ENCODE measurements at regions of chr3 and their contacts with region 1.

Region 1: GRCh38 chr3:128680602-128681368 is 30.2 kb upstream of the RPN1 start:
- DNase-seq: peak; percentile 98
- ATAC-seq: peak; percentile 98
- H3K4me3 Mint-ChIP-seq: peak overlapping the region; percentile 96
- H3K27ac Mint-ChIP-seq: peak overlapping the region; percentile 99
- H3K4me1 Mint-ChIP-seq: peaks cover 31% of the 10 kb centered on the region
- H3K27me3 Mint-ChIP-seq: no peaks in the 10 kb centered on the region

Region 2: DNA sequence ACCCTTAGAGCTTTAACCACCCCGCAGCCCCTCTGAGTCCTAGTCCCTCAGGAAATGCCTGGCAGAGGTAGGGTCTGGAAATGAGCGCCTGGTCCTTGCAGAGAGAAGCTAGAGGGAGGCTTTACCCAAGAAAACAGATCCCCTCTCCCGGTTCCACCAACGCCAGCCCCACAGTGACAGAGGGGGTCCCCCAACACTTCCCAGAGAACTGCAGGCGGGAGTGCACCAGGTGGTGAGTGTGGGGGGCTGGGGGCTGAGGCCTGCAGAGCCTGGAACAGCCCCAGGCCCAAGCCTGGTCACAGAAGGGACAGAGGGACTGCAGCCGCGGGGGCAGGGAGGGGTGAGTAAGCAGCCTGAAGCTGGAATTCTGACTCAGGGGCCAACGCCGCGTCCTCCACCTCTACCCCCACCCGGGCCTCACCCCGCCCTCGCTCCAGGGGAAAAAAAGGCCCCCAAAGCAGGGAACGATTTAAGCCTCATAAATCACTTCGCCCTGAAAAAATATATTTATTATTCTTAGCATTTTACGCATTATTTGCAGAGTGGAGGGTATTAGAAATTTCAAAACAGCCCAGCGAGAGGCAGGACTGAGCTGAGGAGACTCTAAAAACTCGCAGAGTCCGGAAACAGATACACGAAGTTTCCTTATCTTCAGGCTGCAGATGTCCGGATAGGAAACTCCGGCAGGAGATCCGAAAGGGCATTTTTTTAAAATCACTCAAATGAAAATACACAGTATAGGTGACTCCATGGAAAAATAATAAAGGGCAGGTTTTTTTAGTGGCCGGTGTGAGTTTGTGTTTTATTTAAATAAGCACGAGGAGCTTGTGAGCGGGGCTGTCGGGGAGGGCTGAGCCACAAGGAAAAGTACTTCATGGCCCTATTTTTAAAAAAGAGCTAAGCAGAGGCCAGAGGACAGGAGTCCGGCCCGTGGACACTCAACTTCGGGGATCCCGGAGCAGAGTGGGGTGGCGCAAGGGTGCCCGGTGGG is 197.8 kb before region 1 on chr3:
- CTCF ChIA-PET with region 1: no interaction called
- POLR2A ChIA-PET with region 1: no interaction called
- intact Hi-C with region 1: no loop called
- DNase-seq: no peak
- ATAC-seq: no peak
- H3K4me3 Mint-ChIP-seq: no peak overlapping the region
- H3K27ac Mint-ChIP-seq: no peak overlapping the region
- H3K4me1 Mint-ChIP-seq: peaks cover 22% of the 10 kb centered on the region
- H3K27me3 Mint-ChIP-seq: peaks cover 64% of the 10 kb centered on the region

Region 3: DNA sequence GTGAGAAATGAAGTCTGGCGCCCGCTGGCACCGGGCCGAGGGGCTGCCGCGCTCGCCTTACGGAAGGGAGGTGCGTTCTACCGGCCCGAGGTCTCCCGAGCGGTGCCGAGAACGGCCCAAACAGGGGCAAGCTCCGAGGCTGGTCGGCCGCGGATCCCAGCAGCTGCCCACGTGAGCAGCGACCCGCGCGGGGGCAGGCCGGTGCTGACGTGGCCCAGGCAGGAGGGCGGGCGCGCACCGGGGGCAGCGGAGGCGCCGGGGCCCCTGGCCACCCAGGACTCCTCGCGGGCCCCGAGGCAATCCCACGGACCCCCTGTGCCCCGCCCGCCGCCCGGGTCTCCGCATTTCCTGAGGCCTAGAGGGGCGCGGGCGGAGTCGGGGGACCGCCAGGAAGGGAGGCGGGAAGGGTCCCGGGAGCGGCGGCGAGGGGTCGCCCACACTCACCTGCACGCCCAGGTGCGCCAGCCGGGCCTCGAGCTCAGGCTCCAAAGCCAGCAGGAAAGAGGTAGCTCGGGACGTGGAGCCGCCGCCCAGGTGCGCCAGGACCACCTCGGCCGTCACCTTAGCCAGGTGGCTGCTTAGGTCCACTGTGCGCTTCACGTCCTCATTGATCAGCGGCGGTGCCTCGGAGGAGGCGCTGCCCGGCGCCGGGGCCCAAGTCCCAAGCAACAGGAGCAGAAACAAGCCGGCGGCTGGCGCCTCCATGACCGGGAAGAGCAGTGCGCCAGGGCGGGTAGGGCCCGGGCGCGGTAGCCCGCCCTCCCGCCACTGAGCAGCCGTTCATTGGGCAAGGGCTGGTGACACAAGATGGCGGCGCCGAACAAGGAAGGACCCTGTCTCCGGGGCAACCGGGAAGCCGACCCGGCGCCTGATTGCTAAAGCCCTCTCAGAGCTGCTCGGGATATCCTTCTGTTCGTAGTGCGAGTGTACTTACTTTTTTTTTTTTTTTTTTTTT is 30.4 kb before region 1 on chr3 and contains the start of gene RPN1:
- CTCF ChIA-PET with region 1: interaction called, 15 read pairs
- POLR2A ChIA-PET with region 1: interaction called, 9 read pairs
- intact Hi-C with region 1: loop called in 1 of 2 experiments (anchors 1 kb)
- DNase-seq: peak; percentile 97
- ATAC-seq: peak; percentile 97
- H3K4me3 Mint-ChIP-seq: peak within 1 kb of the TSS; percentile 81
- H3K27ac Mint-ChIP-seq: peak within 1 kb of the TSS; percentile 85
- H3K4me1 Mint-ChIP-seq: peaks cover 39% of the 10 kb centered on the region
- H3K27me3 Mint-ChIP-seq: no peaks in the 10 kb centered on the region
- total RNA-seq, gene RPN1: 138 to 153 TPM

Region 4: DNA sequence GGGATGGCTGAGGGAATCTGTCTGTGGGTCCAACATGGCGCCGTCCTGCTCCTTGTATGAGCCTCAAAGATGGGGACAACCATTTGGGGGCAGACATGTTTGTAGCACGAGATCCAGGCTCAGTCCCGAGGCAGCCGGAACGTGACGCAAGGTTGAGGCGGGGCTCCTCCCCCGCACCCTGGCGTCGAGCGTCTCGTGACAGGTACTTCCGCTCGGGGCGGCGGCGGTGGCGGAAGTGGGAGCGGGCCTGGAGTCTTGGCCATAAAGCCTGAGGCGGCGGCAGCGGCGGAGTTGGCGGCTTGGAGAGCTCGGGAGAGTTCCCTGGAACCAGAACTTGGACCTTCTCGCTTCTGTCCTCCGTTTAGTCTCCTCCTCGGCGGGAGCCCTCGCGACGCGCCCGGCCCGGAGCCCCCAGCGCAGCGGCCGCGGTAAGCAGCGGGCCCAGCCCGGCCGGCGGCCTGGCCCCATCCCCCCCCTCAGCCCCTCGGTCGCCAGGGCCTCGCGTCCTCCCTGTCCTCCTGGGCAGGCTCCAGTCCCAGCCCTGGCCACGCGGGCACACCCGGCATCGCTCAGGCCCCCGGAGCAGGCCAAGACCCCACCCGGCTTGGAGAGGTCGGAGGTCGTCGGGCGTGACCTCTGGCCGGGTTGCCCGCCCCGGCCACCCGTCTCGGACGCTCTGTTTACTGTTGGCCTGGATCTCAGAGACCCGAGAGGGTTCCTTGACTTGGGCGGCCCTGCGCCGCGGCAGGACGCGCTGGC is 45.3 kb after region 1 on chr3 and contains the start of gene RAB7A:
- CTCF ChIA-PET with region 1: interaction called, 9 read pairs
- POLR2A ChIA-PET with region 1: interaction called, 7 read pairs
- intact Hi-C with region 1: loop called (anchors 1 kb)
- DNase-seq: peak; percentile 99
- ATAC-seq: peak; percentile 92
- H3K4me3 Mint-ChIP-seq: peak within 1 kb of the TSS; percentile 89
- H3K27ac Mint-ChIP-seq: peak within 1 kb of the TSS; percentile 92
- H3K4me1 Mint-ChIP-seq: peaks cover 52% of the 10 kb centered on the region
- H3K27me3 Mint-ChIP-seq: no peaks in the 10 kb centered on the region
- total RNA-seq, gene RAB7A: 297 to 534 TPM

Region 5: GRCh38 chr3:128794770-128795649 is 114.2 kb after region 1 on chr3:
- CTCF ChIA-PET with region 1: interaction called, 33 read pairs
- POLR2A ChIA-PET with region 1: interaction called, 4 read pairs
- intact Hi-C with region 1: loop called (anchors 1 to 2 kb)
- DNase-seq: peak; percentile 76
- ATAC-seq: peak; percentile 68
- H3K4me3 Mint-ChIP-seq: peak overlapping the region; percentile 37
- H3K27ac Mint-ChIP-seq: peak overlapping the region; percentile 95
- H3K4me1 Mint-ChIP-seq: peaks cover 91% of the 10 kb centered on the region
- H3K27me3 Mint-ChIP-seq: no peaks in the 10 kb centered on the region

Region 6: DNA sequence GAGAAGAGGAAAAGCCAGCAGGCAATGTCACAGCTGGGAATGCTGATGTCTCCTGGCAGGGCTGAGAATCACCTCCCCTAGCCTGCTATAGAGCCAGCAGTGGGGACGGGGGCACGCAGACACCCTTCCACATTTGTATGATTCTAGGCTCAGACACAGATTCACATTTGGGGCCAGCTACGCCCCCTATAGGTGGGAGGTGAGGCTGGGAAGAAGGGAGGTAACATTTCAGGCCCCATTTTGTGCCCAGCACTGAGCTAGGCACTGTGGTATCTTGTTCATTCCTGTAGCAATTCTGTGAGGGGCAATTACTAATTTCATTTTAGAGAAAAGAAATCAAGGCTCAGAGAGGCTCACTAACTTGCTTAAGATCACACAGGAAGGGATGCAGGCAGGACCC is 182.8 kb after region 1 on chr3:
- CTCF ChIA-PET with region 1: interaction called, 4 read pairs
- POLR2A ChIA-PET with region 1: no interaction called
- intact Hi-C with region 1: loop called in 1 of 2 experiments (anchors 5 kb)
- DNase-seq: peak; percentile 60
- ATAC-seq: peak; percentile 62
- H3K4me3 Mint-ChIP-seq: no peak overlapping the region
- H3K27ac Mint-ChIP-seq: no peak overlapping the region
- H3K4me1 Mint-ChIP-seq: no peaks in the 10 kb centered on the region
- H3K27me3 Mint-ChIP-seq: no peaks in the 10 kb centered on the region

Region 7: DNA sequence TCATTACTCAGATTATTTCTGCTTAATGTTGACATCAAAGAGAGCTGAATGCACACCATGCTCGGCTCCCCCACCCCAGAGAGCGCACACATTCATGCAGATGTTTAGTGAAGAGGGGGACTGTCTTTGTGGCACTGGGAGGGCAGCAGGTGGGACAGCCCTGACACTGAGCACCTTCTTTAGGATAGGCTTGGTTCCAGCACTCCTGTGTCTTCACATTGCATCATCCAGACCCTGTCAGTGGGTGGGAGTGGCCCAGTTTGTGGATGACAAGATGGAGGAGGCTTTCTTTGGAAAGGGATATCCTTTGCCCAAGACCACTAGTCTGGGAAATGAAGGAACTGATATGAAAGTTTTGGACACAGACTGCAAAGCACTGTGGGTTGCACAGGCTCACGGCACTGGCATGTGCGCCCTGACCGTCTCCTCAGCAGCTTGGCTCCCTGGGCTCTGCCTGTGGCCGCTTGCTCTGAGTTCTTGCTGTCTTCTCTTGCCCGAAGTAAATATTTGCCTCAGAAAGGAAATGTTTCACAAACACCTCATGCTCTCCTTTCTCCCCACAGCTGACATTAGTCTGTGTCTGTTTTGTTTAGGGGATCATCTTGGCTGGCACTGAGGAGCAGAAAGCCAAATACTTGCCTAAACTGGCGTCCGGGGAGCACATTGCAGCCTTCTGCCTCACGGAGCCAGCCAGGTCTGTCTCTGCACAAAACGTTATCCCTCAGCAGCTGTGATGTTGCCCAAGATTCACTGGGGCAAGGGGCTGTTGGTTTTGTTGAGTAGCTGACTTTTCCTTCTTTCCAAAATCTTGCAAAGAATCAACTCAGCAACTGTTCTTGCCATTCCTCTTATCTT is 215.3 kb after region 1 on chr3:
- CTCF ChIA-PET with region 1: no interaction called
- POLR2A ChIA-PET with region 1: no interaction called
- intact Hi-C with region 1: no loop called
- DNase-seq: peak; percentile 12
- ATAC-seq: no peak
- H3K4me3 Mint-ChIP-seq: no peak overlapping the region
- H3K27ac Mint-ChIP-seq: peak overlapping the region; percentile 75
- H3K4me1 Mint-ChIP-seq: no peaks in the 10 kb centered on the region
- H3K27me3 Mint-ChIP-seq: no peaks in the 10 kb centered on the region